ENCODE measurements at regions of chr13 and their contacts with region 1.

Region 1: GRCh38 chr13:26985285-26985878 is 186.2 kb downstream of the USP12 start:
- DNase-seq: peak; percentile 36 to 54
- ATAC-seq: peak; percentile 80 to 91
- H3K4me3 ChIP-seq: no peak overlapping the region
- H3K27ac ChIP-seq: no peak overlapping the region
- H3K4me1 ChIP-seq: no peaks in the 10 kb centered on the region
- H3K27me3 ChIP-seq: peaks cover 0 to 4% (median 0%) of the 10 kb centered on the region in 3 donors
- CTCF ChIP-seq: peak; percentile 76 to 84 (median 78)
- POLR2A ChIP-seq: no peak

Region 2: DNA sequence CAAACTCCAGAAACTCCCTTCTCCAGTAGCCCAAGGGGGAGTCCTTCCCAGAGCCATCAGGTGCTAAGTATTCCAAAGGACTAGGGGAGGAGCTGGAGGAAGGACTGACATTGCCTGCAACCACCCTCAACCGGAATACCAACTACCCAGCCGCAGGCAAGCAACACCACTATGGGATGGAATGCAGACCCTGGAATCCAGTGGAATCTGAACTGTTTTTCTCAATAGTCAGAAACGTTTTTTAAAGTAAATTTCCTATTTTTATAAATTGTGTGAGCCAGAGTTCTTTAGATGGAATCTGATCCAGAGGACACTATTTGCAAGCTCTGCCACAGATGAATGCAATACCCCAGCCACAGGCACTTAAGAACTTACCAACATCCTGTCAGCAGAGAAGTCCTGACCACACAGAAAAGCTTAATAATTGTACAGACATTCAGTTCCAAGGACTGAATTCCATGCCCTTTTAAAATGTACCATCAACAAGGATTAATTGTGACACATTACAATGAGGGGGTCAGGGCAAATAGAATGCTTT is 94.1 kb after region 1 on chr13:
- in situ Hi-C with region 1: no loop called
- intact Hi-C with region 1: no loop called
- DNase-seq: no peak
- ATAC-seq: no peak
- H3K4me3 ChIP-seq: no peak overlapping the region
- H3K27ac ChIP-seq: no peak overlapping the region
- H3K4me1 ChIP-seq: peaks cover 0 to 3% of the 10 kb centered on the region in 2 donors
- H3K27me3 ChIP-seq: no peaks in the 10 kb centered on the region
- CTCF ChIP-seq: no peak
- POLR2A ChIP-seq: no peak

Region 3: GRCh38 chr13:27171827-27172494 is 186.6 kb after region 1 on chr13:
- in situ Hi-C with region 1: loop called in 1 of 4 experiments (anchors 25 kb)
- intact Hi-C with region 1: loop called (anchors 1 kb)
- DNase-seq: peak; percentile 86 to 91
- ATAC-seq: peak; percentile 79 to 80
- H3K4me3 ChIP-seq: peak overlapping the region; percentile 70 to 85 (median 84)
- H3K27ac ChIP-seq: peak overlapping the region; percentile 88 to 94 (median 89)
- H3K4me1 ChIP-seq: peaks cover 36 to 39% of the 10 kb centered on the region in 2 donors
- H3K27me3 ChIP-seq: no peaks in the 10 kb centered on the region
- CTCF ChIP-seq: peak in 2 of 5 experiments; percentile 36 to 47
- POLR2A ChIP-seq: no peak

Region 4: GRCh38 chr13:27203854-27204253 is 218.5 kb after region 1 on chr13:
- in situ Hi-C with region 1: loop called in 3 of 4 experiments (anchors 10 to 25 kb)
- intact Hi-C with region 1: loop called (anchors 1 kb)
- DNase-seq: no peak
- ATAC-seq: peak in 1 of 2 donors; percentile 12
- H3K4me3 ChIP-seq: no peak overlapping the region
- H3K27ac ChIP-seq: no peak overlapping the region
- H3K4me1 ChIP-seq: no peaks in the 10 kb centered on the region
- H3K27me3 ChIP-seq: no peaks in the 10 kb centered on the region
- CTCF ChIP-seq: peak in 1 of 5 experiments; percentile 19
- POLR2A ChIP-seq: no peak

Region 5: GRCh38 chr13:27362064-27362883 is 376.9 kb after region 1 on chr13:
- in situ Hi-C with region 1: loop called (anchors 5 to 10 kb)
- intact Hi-C with region 1: loop called (anchors 1 kb)
- DNase-seq: peak; percentile 46 to 65
- ATAC-seq: peak; percentile 90 to 96
- H3K4me3 ChIP-seq: peak overlapping the region; percentile 48 to 63 (median 52)
- H3K27ac ChIP-seq: no peak overlapping the region
- H3K4me1 ChIP-seq: peaks cover 3 to 8% of the 10 kb centered on the region in 2 donors
- H3K27me3 ChIP-seq: peaks cover 0 to 3% (median 0%) of the 10 kb centered on the region in 3 donors
- CTCF ChIP-seq: peak; percentile 80 to 93 (median 90)
- POLR2A ChIP-seq: no peak

Region 6: GRCh38 chr13:27997904-27998522 is 1012.6 kb after region 1 on chr13:
- in situ Hi-C with region 1: loop called in 1 of 4 experiments (anchors 25 kb)
- intact Hi-C with region 1: no loop called
- DNase-seq: no peak
- ATAC-seq: no peak
- H3K4me3 ChIP-seq: no peak overlapping the region
- H3K27ac ChIP-seq: no peak overlapping the region
- H3K4me1 ChIP-seq: no peaks in the 10 kb centered on the region
- H3K27me3 ChIP-seq: no peaks in the 10 kb centered on the region
- CTCF ChIP-seq: no peak
- POLR2A ChIP-seq: no peak